Tibial artery (tissue), 4 donors: ENCODE measurements at regions of chr16 and their contacts with region 1.

Region 1: GRCh38 chr16:75238132-75238852 is 13.1 kb downstream of the BCAR1 start:
- DNase-seq: peak; percentile 86 to 96
- H3K4me3 ChIP-seq: peak overlapping the region; percentile 15 to 32
- H3K27ac ChIP-seq: peak overlapping the region; percentile 93 to 99
- H3K4me1 ChIP-seq: peaks cover 0 to 92% (median 74%) of the 10 kb centered on the region in 4 donors
- H3K27me3 ChIP-seq: no peaks in the 10 kb centered on the region
- CTCF ChIP-seq: peak in 1 of 2 experiments; percentile 22

Region 2: GRCh38 chr16:75385507-75386152 is 147.3 kb after region 1 on chr16:
- intact Hi-C with region 1: loop called (anchors 2 kb)
- DNase-seq: no peak
- H3K4me3 ChIP-seq: no peak overlapping the region
- H3K27ac ChIP-seq: no peak overlapping the region
- H3K4me1 ChIP-seq: peaks cover 0 to 39% (median 26%) of the 10 kb centered on the region in 4 donors
- H3K27me3 ChIP-seq: no peaks in the 10 kb centered on the region
- CTCF ChIP-seq: peak; percentile 69 to 90

Region 3: GRCh38 chr16:75402821-75403475 is 164.7 kb after region 1 on chr16:
- intact Hi-C with region 1: loop called (anchors 5 kb)
- DNase-seq: no peak
- H3K4me3 ChIP-seq: no peak overlapping the region
- H3K27ac ChIP-seq: peak overlapping the region; percentile 73 to 79
- H3K4me1 ChIP-seq: peaks cover 0 to 37% (median 9%) of the 10 kb centered on the region in 4 donors
- H3K27me3 ChIP-seq: no peaks in the 10 kb centered on the region
- CTCF ChIP-seq: peak; percentile 69 to 70

Region 4: GRCh38 chr16:75614066-75614897 is 376.0 kb after region 1 on chr16:
- intact Hi-C with region 1: no loop called
- DNase-seq: no peak
- H3K4me3 ChIP-seq: no peak overlapping the region
- H3K27ac ChIP-seq: no peak overlapping the region
- H3K4me1 ChIP-seq: no peaks in the 10 kb centered on the region
- H3K27me3 ChIP-seq: no peaks in the 10 kb centered on the region
- CTCF ChIP-seq: no peak